ENCODE measurements at regions of chr14 and their contacts with region 1.

Region 1: DNA sequence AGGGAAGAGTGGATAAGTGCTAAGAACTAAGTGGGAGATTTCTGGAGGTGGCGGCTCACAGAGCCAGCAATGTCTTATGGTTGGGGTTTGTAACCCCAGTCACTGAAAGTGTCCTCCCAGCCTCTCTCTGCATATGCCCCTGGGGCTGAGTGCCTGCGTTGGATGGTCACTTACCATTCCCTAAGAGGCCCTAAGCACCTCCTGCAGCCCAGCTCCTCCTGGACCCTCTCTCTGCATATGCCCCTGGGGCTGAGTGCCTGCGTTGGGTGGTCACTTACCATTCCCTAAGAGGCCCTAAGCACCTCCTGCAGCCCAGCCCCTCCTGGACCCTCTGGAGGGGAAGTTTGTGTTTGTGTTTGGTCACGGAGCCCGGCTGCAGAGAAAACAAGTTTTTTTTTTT is 425.8 kb downstream of the TMEM121 start:
- DNase-seq: no peak
- H3K4me3 ChIP-seq: no peak overlapping the region
- H3K4me3 Mint-ChIP-seq: no peak overlapping the region
- H3K27ac Mint-ChIP-seq: no peak overlapping the region
- H3K4me1 ChIP-seq: no peaks in the 10 kb centered on the region
- H3K4me1 Mint-ChIP-seq: peaks cover 13% of the 10 kb centered on the region
- H3K27me3 ChIP-seq: no peaks in the 10 kb centered on the region
- H3K27me3 Mint-ChIP-seq: no peaks in the 10 kb centered on the region
- CTCF ChIP-seq: no peak

Region 2: GRCh38 chr14:106024983-106025604 is 72.9 kb after region 1 on chr14:
- CTCF ChIA-PET with region 1: no interaction called
- POLR2A ChIA-PET with region 1: no interaction called
- intact Hi-C with region 1: no loop called
- DNase-seq: no peak
- H3K4me3 ChIP-seq: no peak overlapping the region
- H3K4me3 Mint-ChIP-seq: no peak overlapping the region
- H3K27ac Mint-ChIP-seq: no peak overlapping the region
- H3K4me1 ChIP-seq: no peaks in the 10 kb centered on the region
- H3K4me1 Mint-ChIP-seq: no peaks in the 10 kb centered on the region
- H3K27me3 ChIP-seq: no peaks in the 10 kb centered on the region
- H3K27me3 Mint-ChIP-seq: no peaks in the 10 kb centered on the region
- CTCF ChIP-seq: no peak

Region 3: GRCh38 chr14:106069804-106070625 is 117.8 kb after region 1 on chr14:
- CTCF ChIA-PET with region 1: no interaction called
- POLR2A ChIA-PET with region 1: interaction called, 10 read pairs
- intact Hi-C with region 1: no loop called
- DNase-seq: no peak
- H3K4me3 ChIP-seq: no peak overlapping the region
- H3K4me3 Mint-ChIP-seq: no peak overlapping the region
- H3K27ac Mint-ChIP-seq: no peak overlapping the region
- H3K4me1 ChIP-seq: no peaks in the 10 kb centered on the region
- H3K4me1 Mint-ChIP-seq: no peaks in the 10 kb centered on the region
- H3K27me3 ChIP-seq: no peaks in the 10 kb centered on the region
- H3K27me3 Mint-ChIP-seq: peaks cover 12% of the 10 kb centered on the region
- CTCF ChIP-seq: no peak

Measured in Caco-2 (cell line).